ENCODE measurements at regions of chr1 and their contacts with region 1.

Region 1: DNA sequence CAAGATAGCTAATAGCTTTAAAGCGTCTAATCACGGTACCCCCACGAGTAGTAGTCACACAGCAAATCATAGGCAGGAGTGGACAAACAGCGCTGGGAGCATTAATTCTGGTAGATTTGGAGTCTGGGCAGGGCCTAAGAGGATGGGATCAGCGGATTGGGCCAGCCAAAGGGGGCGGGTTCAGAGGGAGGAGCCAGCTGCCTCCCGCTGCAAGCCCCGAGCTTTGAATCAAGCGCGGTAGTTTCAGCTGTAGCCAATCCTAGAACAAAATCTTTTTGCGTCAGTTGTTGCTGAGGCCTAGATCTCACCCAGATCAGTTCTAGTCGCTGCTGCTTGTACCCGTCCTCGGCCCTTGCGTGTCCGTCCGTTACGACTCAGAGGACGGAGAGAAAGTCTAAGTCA is 576 bp upstream of the NASP start:
- DNase-seq: peak; percentile 92 to 95
- H3K4me3 ChIP-seq: peak overlapping the region; percentile 86
- H3K27ac ChIP-seq: peak overlapping the region; percentile 64
- H3K4me1 ChIP-seq: peaks cover 17% of the 10 kb centered on the region
- H3K27me3 ChIP-seq: no peaks in the 10 kb centered on the region
- CTCF ChIP-seq: no peak

Region 2: DNA sequence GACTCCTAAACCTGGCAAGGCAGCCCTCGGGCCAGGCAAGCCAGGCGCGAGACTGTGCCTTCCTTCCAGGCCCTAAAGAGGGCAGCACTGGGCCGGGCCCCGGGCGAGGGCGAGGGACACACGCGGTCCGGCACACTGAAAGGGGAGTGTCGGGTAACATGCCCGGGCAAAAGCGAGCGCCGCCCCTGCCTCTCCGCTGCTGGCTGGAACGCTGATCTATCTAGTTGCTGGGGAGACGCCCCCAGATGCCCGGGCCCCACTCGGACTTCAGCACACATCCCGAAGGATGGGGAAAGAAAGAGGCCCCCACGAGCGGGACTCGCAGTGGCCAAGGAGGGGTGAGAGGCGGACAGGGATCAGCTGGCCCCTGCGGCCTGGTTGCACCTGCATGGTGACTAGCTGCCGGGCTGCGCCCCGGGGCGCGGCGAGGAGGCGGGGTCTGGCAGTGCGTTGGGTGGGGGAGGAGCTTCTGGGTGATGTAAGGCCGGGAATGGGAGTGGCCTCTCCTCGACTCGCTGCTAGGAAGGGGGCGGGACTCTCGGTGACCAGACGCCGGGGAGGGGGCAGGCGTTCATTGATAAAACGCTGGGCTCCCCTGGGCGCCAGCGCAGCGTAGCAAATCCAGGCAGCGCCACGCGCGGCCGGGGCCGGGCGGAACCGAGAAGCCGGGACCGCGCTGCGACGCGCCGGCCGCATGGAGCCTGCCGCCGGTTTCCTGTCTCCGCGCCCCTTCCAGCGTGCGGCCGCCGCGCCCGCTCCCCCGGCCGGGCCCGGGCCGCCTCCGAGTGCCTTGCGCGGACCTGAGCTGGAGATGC is 783.3 kb before region 1 on chr1 and contains the start of gene PLK3:
- CTCF ChIA-PET with region 1: no interaction called
- POLR2A ChIA-PET with region 1: no interaction called
- intact Hi-C with region 1: loop called (anchors 10 kb)
- DNase-seq: peak; percentile 88 to 99
- H3K4me3 ChIP-seq: peak within 1 kb of the TSS; percentile 82
- H3K27ac ChIP-seq: peak within 1 kb of the TSS; percentile 81
- H3K4me1 ChIP-seq: peaks cover 45% of the 10 kb centered on the region
- H3K27me3 ChIP-seq: no peaks in the 10 kb centered on the region
- CTCF ChIP-seq: peak; percentile 88
- total RNA-seq, gene PLK3: 12.7 and 13.0 TPM in 2 replicates

Region 3: DNA sequence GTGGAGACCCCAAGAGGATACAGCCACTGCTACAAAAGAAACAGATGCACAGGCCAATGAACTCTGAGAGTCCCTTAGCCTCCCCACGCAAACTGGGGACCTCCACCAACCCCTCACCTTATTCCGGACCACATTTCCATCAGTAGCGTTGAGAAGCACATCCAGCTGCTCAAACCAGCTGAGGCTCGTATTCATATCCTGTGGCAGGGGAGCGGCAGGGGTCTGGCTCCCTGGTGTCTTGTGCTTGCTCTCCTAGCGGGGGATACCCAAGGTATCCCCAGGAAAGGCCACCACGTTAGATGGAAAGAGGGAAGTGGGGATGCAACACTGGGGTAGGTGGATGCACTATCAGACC is 83.9 kb before region 1 on chr1:
- CTCF ChIA-PET with region 1: no interaction called
- POLR2A ChIA-PET with region 1: interaction called, 12 read pairs
- intact Hi-C with region 1: no loop called
- DNase-seq: no peak
- H3K4me3 ChIP-seq: peak overlapping the region; percentile 79
- H3K27ac ChIP-seq: no peak overlapping the region
- H3K4me1 ChIP-seq: peaks cover 18% of the 10 kb centered on the region
- H3K27me3 ChIP-seq: no peaks in the 10 kb centered on the region
- CTCF ChIP-seq: no peak

Region 4: GRCh38 chr1:45535988-45536766 is 47.1 kb before region 1 on chr1:
- CTCF ChIA-PET with region 1: no interaction called
- POLR2A ChIA-PET with region 1: interaction called, 15 read pairs
- intact Hi-C with region 1: no loop called
- DNase-seq: no peak
- H3K4me3 ChIP-seq: no peak overlapping the region
- H3K27ac ChIP-seq: no peak overlapping the region
- H3K4me1 ChIP-seq: peaks cover 13% of the 10 kb centered on the region
- H3K27me3 ChIP-seq: no peaks in the 10 kb centered on the region
- CTCF ChIP-seq: no peak

Region 5: GRCh38 chr1:45769261-45769932 is 186.1 kb after region 1 on chr1:
- CTCF ChIA-PET with region 1: no interaction called
- POLR2A ChIA-PET with region 1: interaction called, 15 read pairs
- intact Hi-C with region 1: no loop called
- DNase-seq: no peak
- H3K4me3 ChIP-seq: no peak overlapping the region
- H3K27ac ChIP-seq: no peak overlapping the region
- H3K4me1 ChIP-seq: no peaks in the 10 kb centered on the region
- H3K27me3 ChIP-seq: no peaks in the 10 kb centered on the region
- CTCF ChIP-seq: no peak

Region 6: DNA sequence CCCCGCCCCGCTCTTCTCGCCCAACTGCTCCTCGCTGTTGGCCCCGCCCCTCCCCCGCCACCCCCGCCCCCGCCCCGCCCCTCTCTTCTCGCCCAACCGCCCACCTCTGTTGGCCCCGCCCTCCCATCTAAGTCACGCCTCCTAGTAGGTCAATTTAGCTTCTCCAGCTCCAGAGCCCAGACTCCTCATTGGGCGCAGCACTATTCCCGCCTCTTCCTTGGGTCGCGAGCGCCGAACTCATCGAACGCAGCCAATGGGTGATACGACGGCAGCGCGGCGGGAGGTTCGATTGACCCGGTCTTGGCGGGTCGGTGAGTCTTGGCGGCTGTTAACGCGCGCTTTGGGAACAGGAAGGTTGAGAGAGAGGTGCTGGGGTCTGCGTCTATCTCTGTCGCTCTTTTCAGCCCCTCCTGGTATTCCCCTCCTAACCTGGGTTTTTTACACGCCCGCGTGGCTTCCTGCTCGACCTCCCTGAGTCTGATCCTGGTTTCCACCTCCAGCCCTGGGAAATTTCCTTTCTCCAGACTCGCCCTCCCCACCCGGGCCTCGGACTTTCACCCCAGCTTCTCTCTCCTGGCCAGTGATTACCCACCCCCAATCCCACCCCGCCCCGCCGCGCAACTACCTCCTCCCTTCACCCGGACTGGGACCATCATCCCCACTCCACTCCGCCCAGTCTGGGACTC is 664.3 kb after region 1 on chr1 and contains the start of gene RAD54L:
- CTCF ChIA-PET with region 1: interaction called, 3 read pairs
- POLR2A ChIA-PET with region 1: interaction called, 11 read pairs
- intact Hi-C with region 1: no loop called
- DNase-seq: peak; percentile 95 to 99
- H3K4me3 ChIP-seq: peak within 1 kb of the TSS; percentile 72
- H3K27ac ChIP-seq: peak within 1 kb of the TSS; percentile 60
- H3K4me1 ChIP-seq: peaks cover 21% of the 10 kb centered on the region
- H3K27me3 ChIP-seq: no peaks in the 10 kb centered on the region
- CTCF ChIP-seq: no peak
- total RNA-seq, gene RAD54L: 44.8 and 56.4 TPM in 2 replicates